GM10248 (cell line): ENCODE measurements at regions of chr12 and their contacts with region 1.

Region 1: GRCh38 chr12:75960086-75960910 is 71.3 kb downstream of the PHLDA1 start:
- DNase-seq: peak; percentile 32
- CTCF ChIP-seq: no peak

Region 2: DNA sequence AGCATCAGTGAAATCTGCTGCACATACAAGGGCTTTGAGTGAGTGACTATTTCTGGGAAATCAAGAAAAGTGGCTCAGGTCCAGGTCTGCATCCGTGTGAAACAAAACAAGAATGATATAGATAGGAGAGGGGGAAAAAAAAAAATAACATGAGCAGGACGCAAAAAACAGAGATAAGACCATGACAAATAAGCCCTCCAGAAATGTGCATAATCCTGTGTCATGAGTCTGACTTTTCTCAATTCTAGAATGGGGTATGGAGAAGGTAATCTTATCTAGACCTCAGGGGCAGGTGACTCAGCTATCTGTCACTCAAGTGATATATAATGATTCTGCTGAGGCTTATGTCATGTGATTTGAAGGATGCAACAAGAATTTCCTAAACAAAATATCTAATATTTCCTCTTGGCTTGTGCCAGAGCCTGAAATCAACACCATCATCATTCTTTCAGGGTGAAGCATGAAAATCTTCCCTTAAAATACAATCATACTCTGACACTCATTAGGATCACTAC is 178.7 kb before region 1 on chr12:
- CTCF ChIA-PET with region 1: no interaction called
- POLR2A ChIA-PET with region 1: no interaction called
- DNase-seq: no peak
- CTCF ChIP-seq: no peak

Region 3: DNA sequence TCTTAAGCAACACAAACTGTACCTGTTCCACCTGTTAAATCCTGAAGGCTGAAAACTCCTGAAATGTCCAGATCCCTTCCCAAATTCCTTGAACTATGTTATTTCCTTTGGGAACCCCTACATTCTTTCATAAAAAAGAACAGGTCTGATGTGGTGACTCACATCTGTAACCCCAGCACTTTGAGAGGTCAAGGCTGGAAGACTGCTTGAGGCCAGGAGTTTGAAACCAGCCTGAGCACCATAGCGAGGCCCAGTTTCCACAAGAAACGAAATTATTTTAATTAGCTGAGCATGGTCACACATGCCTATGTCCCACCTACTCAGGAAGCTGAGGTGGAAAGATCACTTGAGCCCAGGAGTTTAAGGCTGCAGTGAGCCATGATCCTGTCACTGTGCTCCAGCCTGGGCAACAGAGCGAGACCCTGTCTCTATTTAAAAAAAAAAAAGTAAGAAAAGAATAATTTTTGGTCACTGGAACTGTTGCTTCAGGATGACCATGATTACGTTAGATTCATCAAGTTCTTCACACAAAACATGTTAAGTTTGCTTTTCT is 13.1 kb before region 1 on chr12:
- CTCF ChIA-PET with region 1: interaction called, 13 read pairs
- POLR2A ChIA-PET with region 1: no interaction called
- DNase-seq: no peak
- CTCF ChIP-seq: no peak

Region 4: GRCh38 chr12:75977952-75978671 is 17.8 kb after region 1 on chr12:
- CTCF ChIA-PET with region 1: no interaction called
- POLR2A ChIA-PET with region 1: no interaction called
- DNase-seq: peak; percentile 75
- CTCF ChIP-seq: no peak

Region 5: GRCh38 chr12:76820888-76821482 is 860.7 kb after region 1 on chr12:
- CTCF ChIA-PET with region 1: no interaction called
- POLR2A ChIA-PET with region 1: no interaction called
- DNase-seq: no peak
- CTCF ChIP-seq: peak; percentile 16